Activated T-helper 2 cell treated with anti-CD3 and anti-CD28 coated beads, Interferon-gamma antibody, Interleukin-2, Interleukin-4, amounts not matched to agents 10 μg/mL and 5 μg/mL and 100 μg/mL, durations not matched to agents 14 hours and 24 hours and 36 hours (primary cell): ENCODE measurements at regions of chr10 and their contacts with region 1.

Region 1: GRCh38 chr10:88270871-88271713 is 312.0 kb downstream of the RNLS start:
- DNase-seq: peak; percentile 67
- H3K4me3 Mint-ChIP-seq: no peak overlapping the region
- H3K27ac Mint-ChIP-seq: peak overlapping the region; percentile 74
- H3K4me1 Mint-ChIP-seq: peaks cover 60% of the 10 kb centered on the region
- H3K27me3 Mint-ChIP-seq: peaks cover 22% of the 10 kb centered on the region

Region 2: GRCh38 chr10:87761892-87762291 is 509.2 kb before region 1 on chr10:
- intact Hi-C with region 1: loop called (anchors 5 kb)
- DNase-seq: peak; percentile 18
- H3K4me3 Mint-ChIP-seq: no peak overlapping the region
- H3K27ac Mint-ChIP-seq: peak overlapping the region; percentile 80
- H3K4me1 Mint-ChIP-seq: peaks cover 31% of the 10 kb centered on the region
- H3K27me3 Mint-ChIP-seq: no peaks in the 10 kb centered on the region

Region 3: DNA sequence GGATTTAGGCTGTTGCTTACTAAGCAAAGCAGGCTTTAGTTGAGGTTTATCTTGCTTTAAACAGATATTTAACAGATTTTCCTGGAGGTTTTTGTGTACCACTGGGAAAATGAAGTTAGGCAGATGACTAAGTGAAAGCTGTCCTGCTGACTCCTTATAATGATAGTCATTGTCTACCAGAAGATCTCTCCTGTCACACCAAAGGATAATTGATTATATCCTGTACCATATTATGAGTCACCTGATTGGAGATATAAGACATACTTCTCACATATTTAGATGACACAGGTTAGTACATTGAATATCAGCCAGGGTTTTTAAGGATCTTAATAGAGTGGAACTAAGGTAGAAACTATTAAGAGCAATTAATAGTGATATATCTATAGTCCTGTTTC is 339.3 kb before region 1 on chr10:
- intact Hi-C with region 1: loop called (anchors 10 kb)
- DNase-seq: no peak
- H3K4me3 Mint-ChIP-seq: no peak overlapping the region
- H3K27ac Mint-ChIP-seq: no peak overlapping the region
- H3K4me1 Mint-ChIP-seq: peaks cover 39% of the 10 kb centered on the region
- H3K27me3 Mint-ChIP-seq: no peaks in the 10 kb centered on the region

Region 4: DNA sequence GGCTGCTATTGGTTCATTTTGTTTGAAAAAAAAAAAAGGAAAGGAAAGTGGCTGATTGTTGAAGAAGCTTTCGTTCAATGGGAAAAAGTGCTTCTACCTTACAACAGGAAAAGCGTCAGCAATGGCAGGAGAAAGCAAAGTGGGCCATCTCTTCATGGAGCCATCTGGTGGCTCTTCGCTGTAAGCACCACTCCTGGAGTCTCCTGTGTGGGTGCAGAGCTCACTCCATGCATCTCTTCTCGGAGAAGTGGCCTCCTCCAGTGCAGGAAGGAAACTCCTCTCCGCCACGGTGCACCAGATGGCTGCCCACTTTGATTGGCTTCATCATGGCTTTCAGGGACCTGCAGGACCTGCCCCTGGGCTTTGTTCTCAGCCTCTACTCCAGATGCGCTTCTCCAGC is 156.7 kb before region 1 on chr10:
- intact Hi-C with region 1: loop called (anchors 1 kb)
- DNase-seq: no peak
- H3K4me3 Mint-ChIP-seq: no peak overlapping the region
- H3K27ac Mint-ChIP-seq: no peak overlapping the region
- H3K4me1 Mint-ChIP-seq: peaks cover 32% of the 10 kb centered on the region
- H3K27me3 Mint-ChIP-seq: peaks cover 7% of the 10 kb centered on the region

Region 5: DNA sequence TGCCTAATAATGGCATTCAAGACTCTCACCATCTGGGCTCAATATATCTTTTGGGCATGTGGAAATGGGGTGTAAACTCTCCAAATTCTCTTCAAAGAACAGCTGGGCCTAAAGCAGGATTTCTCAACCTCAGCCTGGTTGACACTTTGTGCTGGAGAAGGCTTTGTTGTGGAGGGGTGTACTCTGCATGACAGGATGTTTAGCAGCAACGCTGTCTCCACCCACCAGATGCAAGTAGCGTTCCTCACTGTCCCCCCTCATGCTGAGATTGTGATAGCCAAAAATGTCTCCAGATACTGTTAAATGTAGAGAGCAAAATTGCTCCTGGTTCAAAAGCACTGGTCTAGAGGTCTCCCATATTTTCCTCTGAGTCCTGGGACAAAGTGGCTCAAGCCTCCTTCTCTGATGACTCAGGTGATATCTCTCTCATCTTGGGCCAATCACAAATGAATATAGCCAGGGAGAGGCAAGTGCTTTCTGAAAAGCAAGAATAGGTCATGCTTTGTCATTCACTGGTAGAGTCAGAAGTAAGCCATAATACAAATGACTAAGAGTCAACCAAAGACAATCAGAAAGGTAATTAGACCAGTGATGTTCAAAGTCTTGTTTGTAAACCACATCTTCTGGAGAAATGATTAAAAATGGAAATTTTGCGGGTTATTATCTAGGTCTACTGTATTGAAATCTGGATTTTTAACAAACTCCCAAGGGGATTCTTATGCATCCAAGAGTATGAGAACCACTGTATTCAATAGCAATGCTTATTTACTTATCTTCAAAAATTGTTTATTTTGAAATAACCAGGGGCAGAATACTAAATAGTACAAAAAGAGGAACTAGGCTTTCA is 76.8 kb before region 1 on chr10:
- intact Hi-C with region 1: loop called (anchors 2 kb)
- DNase-seq: peak; percentile 20
- H3K4me3 Mint-ChIP-seq: no peak overlapping the region
- H3K27ac Mint-ChIP-seq: peak overlapping the region; percentile 33
- H3K4me1 Mint-ChIP-seq: peaks cover 17% of the 10 kb centered on the region
- H3K27me3 Mint-ChIP-seq: peaks cover 4% of the 10 kb centered on the region

Region 6: GRCh38 chr10:88318803-88319202 is 47.7 kb after region 1 on chr10:
- intact Hi-C with region 1: no loop called
- DNase-seq: no peak
- H3K4me3 Mint-ChIP-seq: no peak overlapping the region
- H3K27ac Mint-ChIP-seq: no peak overlapping the region
- H3K4me1 Mint-ChIP-seq: peaks cover 10% of the 10 kb centered on the region
- H3K27me3 Mint-ChIP-seq: peaks cover 18% of the 10 kb centered on the region

Region 7: GRCh38 chr10:88389456-88389855 is 118.4 kb after region 1 on chr10:
- intact Hi-C with region 1: loop called (anchors 2 kb)
- DNase-seq: no peak
- H3K4me3 Mint-ChIP-seq: no peak overlapping the region
- H3K27ac Mint-ChIP-seq: no peak overlapping the region
- H3K4me1 Mint-ChIP-seq: peaks cover 29% of the 10 kb centered on the region
- H3K27me3 Mint-ChIP-seq: no peaks in the 10 kb centered on the region